ENCODE measurements at regions of chr6 and their contacts with region 1.

Region 1: DNA sequence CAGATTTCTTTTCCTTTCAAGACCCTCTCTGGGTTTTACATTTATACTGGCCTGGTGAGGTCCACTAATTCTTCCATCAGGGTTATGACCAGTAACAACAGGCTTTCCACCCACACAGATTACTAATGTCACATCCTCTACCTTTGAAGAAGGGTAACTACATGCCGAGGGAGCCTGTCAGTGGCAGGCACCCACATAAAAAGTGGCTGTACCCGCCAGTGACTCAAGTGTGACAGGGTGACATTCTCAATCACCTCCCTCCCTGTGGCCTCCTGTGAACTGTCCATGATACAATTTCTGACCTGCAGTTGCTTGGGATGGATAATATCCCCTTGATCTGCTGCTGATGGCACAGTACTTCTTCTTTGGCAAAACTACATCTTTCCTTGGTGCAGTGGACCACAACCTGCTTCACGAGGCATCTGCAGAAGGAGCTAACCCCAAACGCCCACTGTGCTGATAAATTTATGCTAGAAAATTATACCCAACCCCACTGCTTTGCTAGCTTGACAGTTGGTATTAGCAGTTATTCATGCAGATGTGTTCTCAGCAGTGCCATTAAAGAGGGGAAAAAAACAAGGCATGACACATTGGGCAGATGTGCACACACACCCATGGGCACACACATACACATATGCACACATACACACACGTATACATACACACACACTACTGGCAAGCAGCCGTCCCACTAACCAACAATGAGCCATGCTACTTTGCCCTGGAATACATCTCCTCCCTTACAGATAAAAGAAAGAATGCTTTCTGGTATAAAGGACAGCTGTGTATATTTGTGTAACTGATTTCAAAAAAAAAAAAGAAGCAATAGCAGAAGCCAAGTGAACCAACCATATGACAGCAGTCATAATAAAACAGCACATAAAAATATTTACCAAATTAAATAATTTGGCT is 20.8 kb downstream of the GFOD1 start:
- DNase-seq: no peak
- ATAC-seq: peak; percentile 58 to 76 (median 60)
- H3K4me3 ChIP-seq: no peak overlapping the region
- H3K4me3 Mint-ChIP-seq: peak overlapping the region; percentile 13
- H3K27ac ChIP-seq: peak overlapping the region; percentile 43
- H3K27ac Mint-ChIP-seq: peak overlapping the region; percentile 24 to 88
- H3K4me1 ChIP-seq: peaks cover 58% of the 10 kb centered on the region
- H3K4me1 Mint-ChIP-seq: peaks cover 85 to 87% of the 10 kb centered on the region in 2 donors
- H3K27me3 ChIP-seq: no peaks in the 10 kb centered on the region
- H3K27me3 Mint-ChIP-seq: no peaks in the 10 kb centered on the region
- CTCF ChIP-seq: no peak

Region 2: DNA sequence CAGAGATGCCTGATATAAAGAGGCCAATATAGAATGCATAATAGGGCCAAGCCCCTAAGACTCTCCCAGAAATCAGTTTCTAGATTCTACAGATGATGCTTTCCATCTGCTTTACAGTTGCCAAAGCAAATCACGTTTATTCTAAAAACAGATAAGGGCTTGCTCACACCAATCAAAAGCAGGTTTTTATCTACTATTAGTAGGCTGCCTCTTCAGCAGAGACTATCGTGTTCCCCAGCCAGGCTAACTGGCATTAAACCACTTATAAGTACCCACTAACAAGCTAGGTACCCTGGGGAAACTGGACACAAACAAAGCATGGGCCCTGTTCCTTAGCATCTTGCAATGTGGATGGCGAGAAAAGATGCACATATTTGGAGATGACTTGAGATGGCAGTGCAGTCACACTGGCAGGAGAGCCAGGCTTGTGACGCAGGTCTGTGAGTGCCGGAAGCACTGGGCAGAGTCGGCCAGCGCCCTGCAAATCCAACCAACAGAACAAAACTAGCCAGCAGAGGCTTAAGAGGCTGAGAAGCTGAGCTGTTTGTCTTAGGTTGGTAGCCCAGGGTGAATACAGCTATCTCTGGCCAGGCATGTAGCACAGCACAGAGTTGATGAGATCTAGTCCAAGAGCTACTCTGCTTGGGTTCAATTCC is 52.5 kb before region 1 on chr6:
- intact Hi-C with region 1: no loop called
- DNase-seq: peak in 1 of 2 donors; percentile 66
- ATAC-seq: peak in 2 of 3 donors; percentile 92 to 94
- H3K4me3 ChIP-seq: no peak overlapping the region
- H3K4me3 Mint-ChIP-seq: no peak overlapping the region
- H3K27ac ChIP-seq: peak overlapping the region; percentile 61
- H3K27ac Mint-ChIP-seq: peak overlapping the region; percentile 68 to 80
- H3K4me1 ChIP-seq: peaks cover 43% of the 10 kb centered on the region
- H3K4me1 Mint-ChIP-seq: peaks cover 83 to 84% of the 10 kb centered on the region in 2 donors
- H3K27me3 ChIP-seq: no peaks in the 10 kb centered on the region
- H3K27me3 Mint-ChIP-seq: no peaks in the 10 kb centered on the region
- CTCF ChIP-seq: peak; percentile 26

Region 3: DNA sequence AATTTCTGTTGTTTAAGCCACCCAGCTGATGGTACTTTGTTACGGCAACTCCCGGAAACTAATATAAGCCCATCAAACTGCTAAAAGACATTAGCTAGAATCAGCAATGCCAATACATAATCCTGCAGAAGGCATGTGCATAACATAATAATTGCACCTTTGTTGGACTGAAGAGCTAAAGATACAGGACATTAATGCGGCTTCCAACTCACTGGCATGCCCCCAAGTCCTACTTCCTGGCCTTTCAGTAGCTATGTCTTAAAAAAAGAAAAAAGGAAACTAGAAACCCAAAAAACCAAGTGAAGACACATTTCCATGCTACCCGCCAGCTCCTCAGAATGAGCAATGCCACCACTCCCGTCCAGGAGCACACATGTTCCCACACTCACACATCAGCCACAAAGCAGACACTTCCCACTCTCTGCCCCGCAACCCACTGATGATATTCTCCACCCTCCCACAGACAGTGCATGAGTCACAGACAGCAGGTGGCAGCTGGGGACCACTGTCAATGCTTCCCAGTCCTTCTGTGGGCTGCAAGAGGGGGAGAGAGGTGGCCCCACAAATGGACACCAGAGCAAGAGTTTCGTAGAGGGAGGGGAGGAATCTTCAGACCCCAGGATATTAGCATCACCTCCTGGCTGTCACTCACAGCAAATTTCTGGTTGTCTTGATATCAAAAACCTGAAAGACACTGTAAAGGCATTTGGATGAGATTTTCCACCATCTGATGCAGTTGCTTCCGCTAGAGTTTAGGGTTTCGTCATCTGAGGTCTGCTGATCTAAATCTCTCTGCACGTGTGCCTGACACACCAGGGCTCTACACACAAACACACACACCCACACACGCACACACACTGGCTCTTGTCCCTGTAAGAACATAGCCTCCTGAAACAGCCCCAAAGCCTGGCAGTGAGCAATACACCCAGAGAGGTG is 12.0 kb before region 1 on chr6:
- intact Hi-C with region 1: loop called (anchors 1 kb)
- DNase-seq: peak; percentile 81 to 86
- ATAC-seq: peak; percentile 71 to 90 (median 85)
- H3K4me3 ChIP-seq: no peak overlapping the region
- H3K4me3 Mint-ChIP-seq: peak overlapping the region; percentile 89
- H3K27ac ChIP-seq: peak overlapping the region; percentile 91
- H3K27ac Mint-ChIP-seq: peak overlapping the region; percentile 95 to 99
- H3K4me1 ChIP-seq: peaks cover 53% of the 10 kb centered on the region
- H3K4me1 Mint-ChIP-seq: peaks cover 85 to 87% of the 10 kb centered on the region in 2 donors
- H3K27me3 ChIP-seq: no peaks in the 10 kb centered on the region
- H3K27me3 Mint-ChIP-seq: no peaks in the 10 kb centered on the region
- CTCF ChIP-seq: no peak

Measured in natural killer cell (primary cell).